Mammary epithelial cell (primary cell): ENCODE measurements at regions of chr3 and their contacts with region 1.

Region 1: GRCh38 chr3:32143849-32144757 is 37.7 kb downstream of the GPD1L start:
- DNase-seq: peak; percentile 82
- H3K4me3 ChIP-seq: no peak overlapping the region
- H3K27ac ChIP-seq: no peak overlapping the region
- H3K4me1 ChIP-seq: peaks cover 13% of the 10 kb centered on the region
- H3K27me3 ChIP-seq: no peaks in the 10 kb centered on the region
- CTCF ChIP-seq: peak; percentile 78 to 81

Region 2: DNA sequence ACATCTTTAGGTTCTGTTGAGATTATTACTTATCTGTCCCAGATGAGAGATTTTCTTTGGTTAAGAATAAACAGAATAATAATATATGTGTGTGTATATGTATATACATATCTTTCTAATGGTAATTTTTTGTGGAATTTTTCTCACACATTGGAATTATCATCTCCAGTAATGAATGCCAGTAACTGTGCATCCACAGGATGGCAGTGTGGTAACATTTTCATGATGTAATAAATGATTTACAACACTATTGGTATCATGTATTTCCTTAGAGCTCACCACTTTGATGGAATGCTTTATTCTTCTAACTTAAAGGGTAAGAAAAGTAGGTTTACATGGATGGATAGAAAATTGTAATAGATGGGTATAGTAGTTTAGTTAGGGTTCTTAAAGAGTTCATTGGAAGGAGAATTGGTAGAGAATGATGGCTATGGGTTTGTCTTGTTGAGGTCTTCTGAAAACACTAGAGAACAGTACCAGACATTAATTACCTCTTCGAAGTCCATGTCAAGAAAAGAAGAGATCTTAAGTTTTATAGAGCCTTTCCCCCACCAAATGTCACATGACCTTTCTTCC is 533.3 kb before region 1 on chr3:
- CTCF ChIA-PET with region 1: no interaction called
- dilution Hi-C with region 1: no loop called
- in situ Hi-C with region 1: loop called (anchors 25 kb)
- intact Hi-C with region 1: loop called (anchors 1 kb)
- DNase-seq: peak; percentile 36
- H3K4me3 ChIP-seq: no peak overlapping the region
- H3K27ac ChIP-seq: no peak overlapping the region
- H3K4me1 ChIP-seq: peaks cover 4% of the 10 kb centered on the region
- H3K27me3 ChIP-seq: no peaks in the 10 kb centered on the region
- CTCF ChIP-seq: peak; percentile 48 to 64

Region 3: DNA sequence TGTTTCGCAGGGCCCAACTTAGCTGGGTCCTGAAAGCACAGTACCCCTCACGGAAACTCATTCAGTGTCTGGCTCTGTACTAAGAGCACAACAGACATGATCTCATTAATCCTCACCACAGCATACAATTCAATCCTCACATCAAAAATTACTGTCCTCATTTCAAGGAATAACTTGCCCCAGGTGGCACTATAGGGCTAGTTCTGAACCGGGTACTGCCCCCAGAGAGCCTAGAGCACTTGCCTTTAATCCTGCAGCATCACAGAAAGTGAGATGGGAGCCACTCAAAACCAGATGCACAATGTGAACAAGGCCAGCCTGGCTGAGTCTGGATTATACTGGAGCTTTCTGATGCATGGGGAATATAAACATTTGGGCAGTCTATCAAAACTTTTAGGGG is 285.7 kb before region 1 on chr3:
- CTCF ChIA-PET with region 1: no interaction called
- dilution Hi-C with region 1: no loop called
- in situ Hi-C with region 1: loop called in 1 of 2 experiments (anchors 25 kb)
- intact Hi-C with region 1: loop called (anchors 1 kb)
- DNase-seq: no peak
- H3K4me3 ChIP-seq: no peak overlapping the region
- H3K27ac ChIP-seq: no peak overlapping the region
- H3K4me1 ChIP-seq: peaks cover 3% of the 10 kb centered on the region
- H3K27me3 ChIP-seq: no peaks in the 10 kb centered on the region
- CTCF ChIP-seq: peak in 1 of 2 donors; percentile 25

Region 4: DNA sequence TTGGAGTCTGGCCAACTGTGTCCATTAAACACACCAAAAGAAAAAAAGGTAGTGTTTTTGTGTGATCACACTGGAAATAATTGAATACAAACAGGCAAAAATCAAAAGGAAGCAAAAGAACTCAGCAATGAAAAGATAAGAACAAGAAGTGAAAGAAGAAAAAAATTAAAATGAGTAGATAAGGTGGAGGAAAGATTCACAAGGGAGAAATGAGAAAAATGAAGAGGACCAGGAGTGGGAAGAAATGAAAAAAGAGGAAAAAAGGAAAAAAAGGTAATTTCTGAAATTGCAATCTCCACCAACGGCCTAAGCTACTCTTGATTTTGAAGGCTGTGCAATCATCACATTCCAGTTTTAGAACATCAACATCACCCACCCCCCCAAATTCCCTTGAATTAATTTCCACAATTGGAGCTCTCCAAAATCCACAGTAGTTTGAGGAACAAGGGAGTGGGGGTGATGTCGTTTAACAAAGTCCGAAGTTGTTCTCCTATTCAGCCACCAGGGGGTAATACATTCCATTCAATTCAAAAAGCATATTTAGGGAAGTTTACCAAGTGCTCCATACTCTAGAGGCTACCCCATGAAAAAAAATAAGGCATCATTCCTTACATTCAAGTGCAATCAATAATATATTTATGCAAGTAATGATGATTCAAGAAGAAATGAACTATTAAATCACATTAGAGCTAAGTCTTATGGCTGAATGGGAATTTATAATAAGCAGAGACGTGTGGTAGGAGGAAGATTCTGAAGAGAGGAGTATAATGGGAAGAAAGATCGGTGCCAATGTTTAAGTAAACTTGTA is 125.1 kb before region 1 on chr3:
- CTCF ChIA-PET with region 1: interaction called, 19 read pairs
- dilution Hi-C with region 1: no loop called
- in situ Hi-C with region 1: loop called (anchors 10 to 25 kb)
- intact Hi-C with region 1: loop called (anchors 1 kb)
- DNase-seq: peak; percentile 31
- H3K4me3 ChIP-seq: no peak overlapping the region
- H3K27ac ChIP-seq: no peak overlapping the region
- H3K4me1 ChIP-seq: no peaks in the 10 kb centered on the region
- H3K27me3 ChIP-seq: no peaks in the 10 kb centered on the region
- CTCF ChIP-seq: peak; percentile 68 to 70

Region 5: GRCh38 chr3:32106280-32106928 is 37.7 kb before region 1 on chr3 and contains the start of gene GPD1L:
- CTCF ChIA-PET with region 1: no interaction called
- dilution Hi-C with region 1: loop called (anchors 5 kb)
- in situ Hi-C with region 1: no loop called
- intact Hi-C with region 1: no loop called
- DNase-seq: peak; percentile 94
- H3K4me3 ChIP-seq: peak within 1 kb of the TSS; percentile 53 to 90 (median 62)
- H3K27ac ChIP-seq: no peak within 1 kb of the TSS
- H3K4me1 ChIP-seq: peaks cover 16% of the 10 kb centered on the region
- H3K27me3 ChIP-seq: no peaks in the 10 kb centered on the region
- CTCF ChIP-seq: no peak
- total RNA-seq, gene GPD1L: 5.7 to 7.5 TPM